ENCODE measurements at regions of chr1 and their contacts with region 1.

Region 1: GRCh38 chr1:98794196-98794886 is 132.8 kb downstream of the SNX7 start:
- DNase-seq: peak; percentile 61
- ATAC-seq: peak; percentile 97
- H3K4me3 Mint-ChIP-seq: no peak overlapping the region
- H3K27ac Mint-ChIP-seq: no peak overlapping the region
- H3K4me1 Mint-ChIP-seq: peaks cover 27% of the 10 kb centered on the region
- H3K27me3 Mint-ChIP-seq: no peaks in the 10 kb centered on the region

Region 2: GRCh38 chr1:98575955-98576354 is 218.4 kb before region 1 on chr1:
- CTCF ChIA-PET with region 1: no interaction called
- POLR2A ChIA-PET with region 1: no interaction called
- intact Hi-C with region 1: no loop called
- DNase-seq: no peak
- ATAC-seq: no peak
- H3K4me3 Mint-ChIP-seq: no peak overlapping the region
- H3K27ac Mint-ChIP-seq: no peak overlapping the region
- H3K4me1 Mint-ChIP-seq: no peaks in the 10 kb centered on the region
- H3K27me3 Mint-ChIP-seq: no peaks in the 10 kb centered on the region

Region 3: DNA sequence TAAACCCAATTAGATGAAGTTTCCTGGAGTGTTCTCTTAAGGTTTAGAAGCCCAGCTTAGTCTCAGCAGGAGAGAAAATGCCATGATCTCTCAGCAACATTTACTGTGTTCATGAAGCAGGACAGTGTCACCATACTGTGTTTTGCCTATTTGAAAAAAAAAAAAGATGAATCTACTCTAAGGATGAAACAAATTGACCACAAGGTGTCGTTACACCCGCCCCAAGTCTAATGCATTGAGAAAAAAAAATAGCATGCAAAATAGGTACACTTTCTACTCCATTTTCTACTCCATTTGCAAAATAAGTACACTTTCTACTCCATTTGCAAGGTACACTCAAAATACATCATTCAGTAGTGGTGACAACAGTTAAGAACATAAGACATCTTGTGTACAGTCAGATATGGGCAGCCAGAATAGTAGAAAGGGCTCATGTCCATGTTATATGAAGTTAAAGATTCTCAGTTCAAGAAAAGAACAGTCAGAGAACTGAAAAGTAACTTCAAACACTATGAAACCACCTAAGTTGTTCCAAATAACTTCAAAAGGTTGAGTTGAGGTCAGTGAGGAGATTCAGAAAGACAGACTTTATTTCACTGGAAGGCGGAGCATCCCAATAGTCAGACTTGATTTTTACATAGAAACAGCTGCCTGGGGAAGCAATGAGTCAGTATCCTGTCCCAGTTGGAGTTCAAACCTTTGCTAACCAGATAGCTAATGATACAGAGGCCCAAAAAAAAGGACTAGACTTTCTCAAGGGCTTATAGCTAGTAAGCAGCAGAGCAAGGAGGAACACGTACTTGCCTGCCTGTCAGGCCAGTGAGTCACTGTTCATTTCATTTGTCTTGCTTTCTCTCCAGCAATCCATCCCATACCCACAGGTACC is 197.0 kb after region 1 on chr1:
- CTCF ChIA-PET with region 1: interaction called, 5 read pairs
- POLR2A ChIA-PET with region 1: no interaction called
- intact Hi-C with region 1: loop called in 1 of 2 experiments (anchors 5 kb)
- DNase-seq: peak; percentile 43
- ATAC-seq: peak; percentile 87
- H3K4me3 Mint-ChIP-seq: no peak overlapping the region
- H3K27ac Mint-ChIP-seq: peak overlapping the region; percentile 77
- H3K4me1 Mint-ChIP-seq: peaks cover 10% of the 10 kb centered on the region
- H3K27me3 Mint-ChIP-seq: no peaks in the 10 kb centered on the region

Region 4: GRCh38 chr1:99062192-99062591 is 267.9 kb after region 1 on chr1:
- CTCF ChIA-PET with region 1: interaction called, 3 read pairs
- POLR2A ChIA-PET with region 1: interaction called, 10 read pairs
- intact Hi-C with region 1: no loop called
- DNase-seq: no peak
- ATAC-seq: no peak
- H3K4me3 Mint-ChIP-seq: no peak overlapping the region
- H3K27ac Mint-ChIP-seq: no peak overlapping the region
- H3K4me1 Mint-ChIP-seq: no peaks in the 10 kb centered on the region
- H3K27me3 Mint-ChIP-seq: peaks cover 10% of the 10 kb centered on the region

Region 5: GRCh38 chr1:99170516-99170915 is 376.2 kb after region 1 on chr1:
- CTCF ChIA-PET with region 1: interaction called, 8 read pairs
- POLR2A ChIA-PET with region 1: no interaction called
- intact Hi-C with region 1: loop called in 1 of 2 experiments (anchors 10 kb)
- DNase-seq: no peak
- ATAC-seq: peak; percentile 80
- H3K4me3 Mint-ChIP-seq: no peak overlapping the region
- H3K27ac Mint-ChIP-seq: no peak overlapping the region
- H3K4me1 Mint-ChIP-seq: peaks cover 2% of the 10 kb centered on the region
- H3K27me3 Mint-ChIP-seq: peaks cover 13% of the 10 kb centered on the region

Region 6: DNA sequence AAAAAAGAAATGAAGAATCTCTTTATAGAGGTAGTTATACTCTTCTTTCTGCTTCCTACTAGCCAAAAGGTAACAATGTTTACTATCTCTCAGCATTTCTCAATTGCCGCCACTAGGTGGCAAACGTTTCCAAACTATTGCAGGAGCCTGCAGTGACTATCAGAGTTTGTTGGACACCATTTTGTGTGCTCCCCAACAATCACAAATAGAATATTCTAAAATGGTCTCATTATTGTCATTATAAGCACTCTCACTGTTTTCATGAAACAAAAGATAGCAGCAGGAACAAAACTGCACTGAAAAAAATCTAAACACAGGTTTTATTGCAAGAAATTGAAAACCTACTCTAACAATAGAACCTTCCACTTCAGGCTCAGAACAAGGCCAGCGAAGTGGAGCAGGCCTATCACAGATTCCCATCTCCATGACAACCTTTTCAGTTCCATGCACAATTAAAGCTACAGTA is 386.0 kb after region 1 on chr1:
- CTCF ChIA-PET with region 1: interaction called, 8 read pairs
- POLR2A ChIA-PET with region 1: no interaction called
- intact Hi-C with region 1: loop called (anchors 5 to 10 kb)
- DNase-seq: peak; percentile 80
- ATAC-seq: peak; percentile 91
- H3K4me3 Mint-ChIP-seq: no peak overlapping the region
- H3K27ac Mint-ChIP-seq: no peak overlapping the region
- H3K4me1 Mint-ChIP-seq: no peaks in the 10 kb centered on the region
- H3K27me3 Mint-ChIP-seq: no peaks in the 10 kb centered on the region

Region 7: DNA sequence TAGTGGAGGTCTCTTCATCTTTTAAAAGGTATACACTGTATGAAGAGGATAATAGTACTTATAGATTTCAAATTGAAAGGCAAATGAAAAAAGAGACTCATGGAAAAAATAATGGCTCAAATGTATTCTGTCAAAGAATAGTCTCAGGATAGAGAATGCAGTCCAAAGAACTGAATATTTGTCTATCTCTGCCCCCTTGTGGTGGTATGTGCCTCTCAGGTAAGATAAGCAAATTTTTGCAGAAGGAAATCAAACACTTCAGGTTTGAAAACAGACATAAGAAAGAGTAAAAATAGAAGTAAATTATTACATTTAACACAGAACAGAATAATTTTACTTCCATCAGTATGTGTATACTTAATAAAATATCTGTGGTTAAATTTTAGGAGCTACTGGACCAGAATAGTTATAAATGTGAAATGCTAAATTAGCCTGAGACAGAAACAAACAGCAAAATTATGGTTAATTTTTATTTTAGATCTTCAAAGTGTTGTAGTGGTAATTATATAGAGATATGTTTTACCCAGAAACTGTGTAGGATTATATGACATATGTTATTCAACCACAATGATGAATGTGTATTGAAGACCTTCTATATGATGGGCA is 687.2 kb after region 1 on chr1:
- CTCF ChIA-PET with region 1: interaction called, 25 read pairs
- POLR2A ChIA-PET with region 1: no interaction called
- intact Hi-C with region 1: loop called (anchors 1 kb)
- DNase-seq: peak; percentile 46
- ATAC-seq: no peak
- H3K4me3 Mint-ChIP-seq: no peak overlapping the region
- H3K27ac Mint-ChIP-seq: no peak overlapping the region
- H3K4me1 Mint-ChIP-seq: no peaks in the 10 kb centered on the region
- H3K27me3 Mint-ChIP-seq: peaks cover 4% of the 10 kb centered on the region

Region 8: GRCh38 chr1:99707535-99708142 is 913.3 kb after region 1 on chr1:
- CTCF ChIA-PET with region 1: no interaction called
- POLR2A ChIA-PET with region 1: no interaction called
- intact Hi-C with region 1: loop called (anchors 5 kb)
- DNase-seq: peak; percentile 79
- ATAC-seq: peak; percentile 61
- H3K4me3 Mint-ChIP-seq: no peak overlapping the region
- H3K27ac Mint-ChIP-seq: no peak overlapping the region
- H3K4me1 Mint-ChIP-seq: peaks cover 12% of the 10 kb centered on the region
- H3K27me3 Mint-ChIP-seq: no peaks in the 10 kb centered on the region

Region 9: DNA sequence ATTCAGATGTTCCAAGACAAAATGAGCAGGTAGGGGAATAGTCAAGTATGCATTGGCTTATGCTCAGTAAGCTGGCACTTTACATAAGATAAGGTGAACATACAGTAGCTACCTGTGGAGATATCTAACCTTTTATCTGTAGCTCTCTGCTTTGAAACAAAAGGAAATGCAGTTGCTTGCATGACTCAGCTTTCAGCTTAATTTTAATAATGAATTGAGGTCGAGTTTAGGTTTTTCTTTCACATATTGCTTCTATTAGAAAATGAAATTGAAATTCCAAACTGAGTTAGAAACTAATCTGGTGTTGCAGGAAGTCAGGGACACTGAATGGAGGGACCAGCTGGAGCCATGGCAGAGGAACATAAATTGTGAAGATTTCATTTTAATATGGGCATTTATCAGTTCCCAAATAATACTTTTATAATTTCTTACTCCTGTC is 963.8 kb after region 1 on chr1:
- CTCF ChIA-PET with region 1: no interaction called
- POLR2A ChIA-PET with region 1: no interaction called
- intact Hi-C with region 1: no loop called
- DNase-seq: no peak
- ATAC-seq: peak; percentile 19
- H3K4me3 Mint-ChIP-seq: no peak overlapping the region
- H3K27ac Mint-ChIP-seq: no peak overlapping the region
- H3K4me1 Mint-ChIP-seq: peaks cover 18% of the 10 kb centered on the region
- H3K27me3 Mint-ChIP-seq: peaks cover 2% of the 10 kb centered on the region